Activated CD4-positive, alpha-beta T cell treated with anti-CD3 and anti-CD28 coated beads, Interleukin-2, amount 10 ng/mL, durations not matched to agents 24 days and 14 days (primary cell): ENCODE measurements at regions of chr16 and their contacts with region 1.

Region 1: DNA sequence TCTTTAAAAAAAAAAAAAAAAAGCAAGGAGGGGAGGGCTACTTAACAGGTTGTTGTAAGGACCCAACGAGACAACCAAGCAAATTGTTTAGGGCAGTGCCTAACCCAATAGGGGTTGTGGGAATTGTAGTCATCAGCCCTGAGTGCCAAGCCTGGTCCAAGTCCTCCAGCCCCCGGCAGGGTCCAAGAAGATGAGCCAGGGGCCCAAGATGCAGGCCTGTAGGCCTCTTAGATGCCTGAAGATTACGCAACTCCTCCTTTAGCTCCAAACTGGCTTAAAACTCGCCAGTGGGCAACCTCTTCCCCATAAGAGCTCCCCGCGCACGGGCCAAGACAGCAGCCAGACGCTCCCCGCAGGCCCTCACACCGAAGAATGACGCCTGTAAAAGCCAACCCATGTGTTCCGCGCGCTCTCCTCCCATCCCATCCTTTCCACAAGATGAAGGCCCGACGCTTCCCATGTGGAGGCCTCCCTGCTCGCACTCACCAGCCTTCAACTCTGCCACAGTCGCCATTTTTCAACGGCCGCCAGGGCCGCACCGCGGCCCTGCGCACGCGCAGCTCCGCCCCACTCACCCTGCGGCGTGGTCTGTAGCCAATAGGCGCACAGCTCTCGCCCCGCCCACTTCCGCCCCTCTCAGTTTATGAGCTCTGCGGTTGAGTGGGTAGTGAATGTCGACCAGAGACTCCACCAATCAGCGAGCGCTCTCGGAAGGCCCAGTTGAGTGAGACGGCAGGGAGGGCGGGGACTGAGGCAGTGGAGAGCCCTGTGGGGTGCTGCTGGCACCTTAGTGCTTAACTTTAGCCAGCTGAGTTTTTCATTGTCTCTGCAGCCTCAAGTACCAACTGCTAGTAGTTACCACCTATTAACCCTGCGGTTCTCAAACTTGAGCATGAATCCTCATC is at the start of gene CEP20:
- DNase-seq: peak; percentile 100
- H3K4me3 Mint-ChIP-seq: peak within 1 kb of the TSS; percentile 96
- H3K27ac Mint-ChIP-seq: peak within 1 kb of the TSS; percentile 96
- H3K4me1 Mint-ChIP-seq: peaks cover 31% of the 10 kb centered on the region
- H3K27me3 Mint-ChIP-seq: no peaks in the 10 kb centered on the region
- total RNA-seq, gene CEP20: 39.2 and 46.1 TPM in 2 replicates

Region 2: DNA sequence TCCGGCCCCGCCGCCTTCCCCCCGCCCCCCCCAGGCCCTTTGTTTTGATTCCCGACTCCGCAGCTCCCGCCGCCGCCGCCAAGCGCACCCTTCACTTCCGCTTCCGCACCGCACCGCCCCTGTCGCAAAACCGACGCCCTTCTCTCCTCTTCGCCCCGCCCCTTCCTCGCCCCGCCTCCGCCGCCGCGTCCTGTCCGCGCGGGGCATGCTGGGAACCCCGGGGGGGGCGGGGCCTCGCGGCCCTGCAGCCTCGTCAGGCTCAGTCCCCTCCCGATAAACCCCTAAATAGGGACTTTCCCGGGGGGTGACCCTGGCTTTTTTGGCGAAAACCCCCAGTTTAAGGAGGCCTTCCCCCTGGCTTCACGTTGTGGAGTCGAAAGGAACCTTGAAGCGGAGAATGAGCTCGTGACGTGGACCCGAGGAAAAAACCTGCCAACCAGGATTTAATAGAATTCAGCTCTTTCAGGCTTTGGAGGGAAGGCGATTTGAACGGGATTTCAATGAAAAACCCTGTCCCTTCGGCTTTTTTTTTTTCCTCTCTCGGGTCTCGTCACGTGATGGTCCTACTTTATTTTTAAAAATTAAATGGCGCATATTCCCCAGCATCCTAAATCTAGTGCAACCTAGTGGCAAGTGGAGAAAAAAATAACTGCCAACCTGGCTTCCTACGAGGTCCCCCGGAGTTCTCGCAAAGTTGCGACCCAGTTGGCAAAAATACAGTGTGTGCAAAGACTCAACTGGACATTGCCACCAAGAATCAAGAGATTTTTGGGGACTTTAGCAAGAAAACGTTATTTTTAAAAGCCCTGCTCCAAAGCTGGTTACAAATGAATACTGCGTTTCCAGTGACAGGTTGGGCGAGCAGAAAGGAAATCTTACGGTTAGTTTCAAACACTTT is 245.0 kb before region 1 on chr16 and contains the start of gene MARF1:
- intact Hi-C with region 1: loop called (anchors 2 kb)
- DNase-seq: peak; percentile 100
- H3K4me3 Mint-ChIP-seq: peak within 1 kb of the TSS; percentile 94
- H3K27ac Mint-ChIP-seq: peak within 1 kb of the TSS; percentile 97
- H3K4me1 Mint-ChIP-seq: peaks cover 42% of the 10 kb centered on the region
- H3K27me3 Mint-ChIP-seq: no peaks in the 10 kb centered on the region
- total RNA-seq, gene MARF1: 55.6 and 56.2 TPM in 2 replicates

Region 3: DNA sequence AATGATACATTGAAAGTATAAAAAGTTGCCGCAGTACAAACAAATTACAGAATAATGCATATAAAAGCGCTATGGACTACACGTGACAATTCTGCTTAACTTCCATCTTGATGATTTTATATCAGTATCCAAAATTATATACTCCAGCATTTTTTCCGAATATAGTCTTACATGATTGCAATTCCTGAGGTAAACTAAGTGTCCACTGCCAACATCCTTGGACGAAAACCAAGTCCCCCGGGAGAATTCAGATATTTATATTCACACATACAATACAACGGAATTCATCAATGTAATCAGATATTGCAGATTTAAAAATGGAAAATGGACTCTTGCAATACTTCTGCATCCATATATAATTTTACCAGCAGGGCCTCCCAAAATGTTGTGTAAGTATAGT is 22.6 kb before region 1 on chr16:
- intact Hi-C with region 1: no loop called
- DNase-seq: no peak
- H3K4me3 Mint-ChIP-seq: no peak overlapping the region
- H3K27ac Mint-ChIP-seq: no peak overlapping the region
- H3K4me1 Mint-ChIP-seq: no peaks in the 10 kb centered on the region
- H3K27me3 Mint-ChIP-seq: peaks cover 4% of the 10 kb centered on the region

Region 4: DNA sequence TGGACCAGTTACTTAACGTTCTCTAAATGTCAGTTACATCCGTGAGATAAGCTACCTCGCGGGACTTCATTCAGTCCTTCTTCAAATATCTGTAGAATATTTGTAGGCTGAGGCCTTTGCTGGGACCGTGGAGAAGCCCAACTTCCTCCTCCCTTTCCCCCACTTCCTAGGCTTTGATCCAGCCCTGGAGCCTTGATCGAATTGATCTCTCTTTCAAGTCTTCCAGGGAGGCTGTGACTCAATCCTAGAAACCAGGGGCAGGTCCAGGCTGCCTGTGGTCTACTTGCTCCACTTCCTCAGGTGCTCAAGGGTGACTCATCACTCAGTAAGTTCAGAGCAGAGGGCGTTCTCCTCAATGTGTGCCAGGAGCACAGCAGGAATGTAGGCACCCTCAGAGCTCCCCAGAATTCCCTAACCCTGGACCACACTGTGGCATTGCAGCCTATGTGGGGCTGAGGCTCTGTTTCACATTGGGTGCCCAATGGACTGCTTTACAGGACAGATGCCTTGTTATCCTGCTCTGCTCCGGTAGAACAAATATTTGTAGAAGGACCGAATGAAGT is 11.3 kb after region 1 on chr16:
- intact Hi-C with region 1: loop called (anchors 1 kb)
- DNase-seq: peak; percentile 83
- H3K4me3 Mint-ChIP-seq: peak overlapping the region; percentile 47
- H3K27ac Mint-ChIP-seq: peak overlapping the region; percentile 76
- H3K4me1 Mint-ChIP-seq: peaks cover 30% of the 10 kb centered on the region
- H3K27me3 Mint-ChIP-seq: peaks cover 1% of the 10 kb centered on the region

Region 5: DNA sequence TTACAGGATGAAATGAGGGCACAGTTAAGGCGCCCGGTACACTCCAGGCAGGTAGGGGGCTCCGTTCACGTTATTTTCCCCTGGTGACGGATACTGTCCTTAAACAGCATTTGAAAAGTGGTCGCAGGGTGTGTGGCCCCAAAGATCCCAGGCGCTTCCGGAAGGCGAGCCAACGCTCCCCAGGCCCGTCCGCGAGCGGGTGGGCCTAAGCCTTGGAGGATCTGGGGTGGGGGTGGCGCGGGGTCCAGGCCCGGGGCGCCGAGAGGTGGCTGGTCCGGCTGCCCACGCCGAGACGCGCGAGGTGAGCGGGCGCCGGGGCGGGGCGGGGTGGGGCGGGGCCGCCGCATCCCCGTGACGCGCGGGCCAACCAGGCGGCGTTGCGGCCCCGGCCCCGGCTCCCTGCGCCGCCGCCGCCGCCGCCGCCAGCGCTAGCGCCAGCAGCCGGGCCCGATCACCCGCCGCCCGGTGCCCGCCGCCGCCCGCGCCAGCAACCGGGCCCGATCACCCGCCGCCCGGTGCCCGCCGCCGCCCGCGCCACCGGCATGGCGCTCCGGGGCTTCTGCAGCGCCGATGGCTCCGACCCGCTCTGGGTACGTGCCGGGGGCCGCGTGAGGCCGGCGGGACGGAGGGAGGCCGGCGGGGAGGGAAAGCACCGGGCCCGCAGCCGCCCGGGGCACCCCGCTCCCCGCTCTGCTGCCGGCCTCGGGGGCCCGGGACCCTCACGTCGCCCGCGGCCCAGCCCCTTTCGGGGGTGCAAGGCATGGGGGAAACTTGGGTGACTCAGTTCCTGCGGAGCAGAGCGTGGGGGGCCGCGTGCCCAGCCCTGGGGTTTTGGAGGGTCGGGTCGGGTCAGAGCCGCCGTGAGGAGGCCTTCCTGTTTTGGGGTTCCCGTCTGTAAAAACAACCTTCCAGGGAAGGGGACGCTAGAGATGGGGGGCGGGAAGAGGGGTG is 61.2 kb after region 1 on chr16 and contains the start of gene ABCC1:
- intact Hi-C with region 1: loop called (anchors 1 kb)
- DNase-seq: peak; percentile 85
- H3K4me3 Mint-ChIP-seq: peak within 1 kb of the TSS; percentile 94
- H3K27ac Mint-ChIP-seq: peak within 1 kb of the TSS; percentile 100
- H3K4me1 Mint-ChIP-seq: peaks cover 42% of the 10 kb centered on the region
- H3K27me3 Mint-ChIP-seq: no peaks in the 10 kb centered on the region
- total RNA-seq, gene ABCC1: 92.2 and 93.5 TPM in 2 replicates

Region 6: DNA sequence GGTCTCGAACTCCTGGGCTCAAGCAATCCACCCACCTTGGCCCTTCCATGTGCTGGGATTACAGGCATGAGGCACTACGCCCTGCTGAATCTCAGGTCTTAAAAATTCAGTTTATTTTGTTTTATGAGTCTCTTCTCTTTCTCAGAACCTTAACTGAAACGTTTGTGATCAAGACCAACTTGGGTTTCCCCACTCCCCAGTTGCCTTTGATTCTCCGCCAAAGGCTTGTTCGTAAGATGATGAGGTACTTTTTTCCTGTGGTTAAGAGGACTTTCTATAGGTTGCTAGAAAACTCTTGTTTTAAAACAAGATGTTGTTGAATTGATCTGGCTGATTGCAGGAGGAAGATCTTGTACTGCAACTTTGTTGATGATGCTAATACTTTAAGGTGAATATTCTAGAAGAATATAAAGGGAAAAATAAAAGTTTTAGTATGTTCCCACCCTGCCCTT is 72.8 kb after region 1 on chr16:
- intact Hi-C with region 1: loop called (anchors 2 kb)
- DNase-seq: peak; percentile 94
- H3K4me3 Mint-ChIP-seq: peak overlapping the region; percentile 68
- H3K27ac Mint-ChIP-seq: peak overlapping the region; percentile 96
- H3K4me1 Mint-ChIP-seq: peaks cover 60% of the 10 kb centered on the region
- H3K27me3 Mint-ChIP-seq: no peaks in the 10 kb centered on the region

Region 7: GRCh38 chr16:16025214-16025968 is 137.1 kb after region 1 on chr16:
- intact Hi-C with region 1: loop called (anchors 2 kb)
- DNase-seq: peak; percentile 81
- H3K4me3 Mint-ChIP-seq: peak overlapping the region; percentile 60
- H3K27ac Mint-ChIP-seq: peak overlapping the region; percentile 92
- H3K4me1 Mint-ChIP-seq: peaks cover 41% of the 10 kb centered on the region
- H3K27me3 Mint-ChIP-seq: no peaks in the 10 kb centered on the region

Region 8: GRCh38 chr16:16861546-16861945 is 973.2 kb after region 1 on chr16:
- intact Hi-C with region 1: no loop called
- DNase-seq: peak; percentile 85
- H3K4me3 Mint-ChIP-seq: no peak overlapping the region
- H3K27ac Mint-ChIP-seq: no peak overlapping the region
- H3K4me1 Mint-ChIP-seq: peaks cover 2% of the 10 kb centered on the region
- H3K27me3 Mint-ChIP-seq: peaks cover 3% of the 10 kb centered on the region